Activated CD4-positive, alpha-beta T cell treated with anti-CD3 and anti-CD28 coated beads, Interleukin-2, amount 10 ng/mL, durations not matched to agents 24 days and 14 days (primary cell): ENCODE measurements at regions of chr20 and their contacts with region 1.

Region 1: GRCh38 chr20:4082406-4083097 is 67.2 kb upstream of the RNF24 start:
- DNase-seq: peak; percentile 90
- H3K4me3 Mint-ChIP-seq: peak overlapping the region; percentile 60
- H3K27ac Mint-ChIP-seq: peak overlapping the region; percentile 91
- H3K4me1 Mint-ChIP-seq: peaks cover 43% of the 10 kb centered on the region
- H3K27me3 Mint-ChIP-seq: no peaks in the 10 kb centered on the region

Region 2: DNA sequence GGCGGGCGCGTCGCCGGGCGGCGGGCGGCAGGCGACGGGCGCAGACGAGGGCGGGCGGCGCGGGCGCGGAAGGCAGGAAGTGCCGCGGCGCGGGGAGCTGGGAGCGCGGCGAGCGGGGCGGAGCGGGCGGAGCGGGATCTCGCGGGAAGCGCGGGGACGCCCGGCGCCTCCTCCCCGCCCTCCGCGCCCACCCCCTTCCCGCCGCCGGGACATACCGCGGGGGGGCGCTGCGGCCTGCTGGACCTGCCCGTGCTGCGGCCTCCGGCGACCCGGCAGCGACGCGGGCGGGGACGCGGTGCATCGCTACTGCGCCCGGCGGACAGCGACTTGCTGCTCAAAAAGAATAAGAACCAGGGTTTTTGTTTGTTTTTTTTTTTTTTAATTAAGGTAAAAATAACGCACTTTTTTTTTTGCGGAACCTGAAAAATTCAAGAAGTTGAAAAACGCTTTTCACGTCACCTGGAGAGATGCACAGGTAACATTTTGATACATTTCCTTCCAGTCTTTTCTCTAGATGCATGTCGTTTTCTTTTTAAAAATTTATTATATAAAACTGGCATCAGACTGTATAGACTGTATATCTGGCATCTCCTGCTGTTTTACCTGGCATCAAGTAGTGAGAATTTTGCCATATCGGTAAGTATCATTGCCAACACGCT is 295.8 kb before region 1 on chr20 and contains the start of gene CENPB:
- intact Hi-C with region 1: loop called (anchors 1 kb)
- DNase-seq: peak; percentile 98
- H3K4me3 Mint-ChIP-seq: peak within 1 kb of the TSS; percentile 87
- H3K27ac Mint-ChIP-seq: peak within 1 kb of the TSS; percentile 79
- H3K4me1 Mint-ChIP-seq: peaks cover 32% of the 10 kb centered on the region
- H3K27me3 Mint-ChIP-seq: no peaks in the 10 kb centered on the region
- total RNA-seq, gene CENPB: 72.8 and 74.4 TPM in 2 replicates

Region 3: DNA sequence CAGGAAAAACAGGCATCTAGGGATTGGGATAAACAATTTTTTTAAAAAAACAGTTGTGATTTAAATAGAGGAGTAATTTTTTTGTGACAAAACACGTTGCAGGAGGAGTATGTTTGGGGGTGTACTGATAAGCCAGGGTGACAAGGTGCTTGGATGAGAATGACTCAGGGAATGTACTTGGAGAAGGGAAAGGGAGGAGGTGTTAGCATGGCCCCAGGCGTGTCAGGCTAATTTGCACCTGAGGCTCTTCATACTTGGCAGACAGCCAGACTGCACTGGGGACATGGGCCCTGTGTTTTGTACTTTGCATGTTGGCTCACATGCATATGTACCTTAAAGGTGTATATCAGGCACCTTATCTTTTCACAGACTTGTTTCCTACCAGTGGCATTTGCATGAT is 170.6 kb before region 1 on chr20:
- intact Hi-C with region 1: loop called (anchors 2 kb)
- DNase-seq: no peak
- H3K4me3 Mint-ChIP-seq: no peak overlapping the region
- H3K27ac Mint-ChIP-seq: no peak overlapping the region
- H3K4me1 Mint-ChIP-seq: peaks cover 37% of the 10 kb centered on the region
- H3K27me3 Mint-ChIP-seq: no peaks in the 10 kb centered on the region

Region 4: GRCh38 chr20:4014031-4014474 is 68.5 kb before region 1 on chr20:
- intact Hi-C with region 1: loop called (anchors 1 kb)
- DNase-seq: peak; percentile 82
- H3K4me3 Mint-ChIP-seq: peak overlapping the region; percentile 77
- H3K27ac Mint-ChIP-seq: peak overlapping the region; percentile 68
- H3K4me1 Mint-ChIP-seq: peaks cover 46% of the 10 kb centered on the region
- H3K27me3 Mint-ChIP-seq: no peaks in the 10 kb centered on the region